ENCODE measurements at regions of chr9 and their contacts with region 1.

Region 1: DNA sequence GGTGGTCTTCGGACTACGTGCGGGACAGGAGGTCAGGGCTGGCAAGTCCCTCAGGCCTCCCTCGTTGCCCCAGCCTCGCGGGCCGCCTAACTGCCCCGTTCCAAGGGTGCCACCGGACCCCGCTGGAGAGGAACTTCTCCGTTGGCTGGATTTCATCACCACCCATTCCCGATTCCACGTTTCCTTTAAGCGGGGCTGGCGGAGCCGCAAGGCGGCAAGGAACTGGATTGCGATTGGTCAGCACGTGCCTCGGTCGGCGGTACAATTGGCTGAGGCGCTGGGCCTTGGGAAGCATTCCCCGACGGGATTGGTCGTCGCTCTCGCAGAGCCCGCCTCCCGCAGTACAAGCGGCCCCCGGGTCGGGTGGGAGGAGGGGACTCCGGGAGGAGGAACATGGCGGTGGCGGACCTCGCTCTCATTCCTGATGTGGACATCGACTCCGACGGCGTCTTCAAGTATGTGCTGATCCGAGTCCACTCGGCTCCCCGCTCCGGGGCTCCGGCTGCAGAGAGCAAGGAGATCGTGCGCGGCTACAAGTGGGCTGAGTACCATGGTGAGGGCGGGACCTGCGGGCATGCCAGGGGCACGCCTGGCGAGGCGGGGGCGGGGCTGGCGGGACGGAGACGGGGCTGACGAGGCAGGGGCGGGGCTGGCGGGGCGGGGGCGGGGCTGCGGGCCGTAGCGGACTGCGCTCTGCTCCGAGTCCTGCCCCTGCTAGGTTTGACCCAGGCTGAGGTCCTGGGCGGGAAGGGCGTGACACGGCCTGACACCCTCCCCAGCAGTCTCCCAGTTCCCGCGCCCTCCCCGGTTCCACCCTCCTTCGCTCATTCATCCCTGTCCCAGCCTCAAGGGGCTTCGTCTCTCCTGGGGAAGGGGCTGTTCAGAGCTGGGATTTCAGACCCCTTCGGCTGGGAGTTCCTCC is at the start of gene PHPT1:
- DNase-seq: peak; percentile 98
- ATAC-seq: peak; percentile 93
- H3K4me3 Mint-ChIP-seq: peak within 1 kb of the TSS; percentile 88
- H3K27ac Mint-ChIP-seq: peak within 1 kb of the TSS; percentile 92
- H3K4me1 Mint-ChIP-seq: peaks cover 16% of the 10 kb centered on the region
- H3K27me3 Mint-ChIP-seq: peaks cover 20% of the 10 kb centered on the region
- total RNA-seq, gene PHPT1: 96.8 to 116 TPM

Region 2: GRCh38 chr9:136807281-136808074 is 41.8 kb before region 1 on chr9 and contains the start of gene RABL6:
- CTCF ChIA-PET with region 1: interaction called, 28 read pairs
- DNase-seq: peak; percentile 83
- ATAC-seq: peak; percentile 91
- H3K4me3 Mint-ChIP-seq: peak within 1 kb of the TSS; percentile 82
- H3K27ac Mint-ChIP-seq: peak within 1 kb of the TSS; percentile 79
- H3K4me1 Mint-ChIP-seq: peaks cover 42% of the 10 kb centered on the region
- H3K27me3 Mint-ChIP-seq: no peaks in the 10 kb centered on the region
- total RNA-seq, gene RABL6: 113 to 123 TPM

Region 3: GRCh38 chr9:136835162-136835931 is 14.0 kb before region 1 on chr9:
- CTCF ChIA-PET with region 1: no interaction called
- DNase-seq: no peak
- ATAC-seq: no peak
- H3K4me3 Mint-ChIP-seq: no peak overlapping the region
- H3K27ac Mint-ChIP-seq: no peak overlapping the region
- H3K4me1 Mint-ChIP-seq: no peaks in the 10 kb centered on the region
- H3K27me3 Mint-ChIP-seq: no peaks in the 10 kb centered on the region

Region 4: GRCh38 chr9:136885950-136886578 is 36.8 kb after region 1 on chr9 and contains the start of gene TRAF2:
- CTCF ChIA-PET with region 1: interaction called, 24 read pairs
- DNase-seq: peak; percentile 98
- ATAC-seq: peak; percentile 91
- H3K4me3 Mint-ChIP-seq: peak within 1 kb of the TSS; percentile 96
- H3K27ac Mint-ChIP-seq: peak within 1 kb of the TSS; percentile 88
- H3K4me1 Mint-ChIP-seq: peaks cover 62% of the 10 kb centered on the region
- H3K27me3 Mint-ChIP-seq: no peaks in the 10 kb centered on the region
- total RNA-seq, gene TRAF2: 58.4 to 67.6 TPM

Region 5: GRCh38 chr9:136902259-136902821 is 53.0 kb after region 1 on chr9:
- CTCF ChIA-PET with region 1: interaction called, 12 read pairs
- DNase-seq: peak; percentile 88
- ATAC-seq: peak; percentile 83
- H3K4me3 Mint-ChIP-seq: peak overlapping the region; percentile 59
- H3K27ac Mint-ChIP-seq: peak overlapping the region; percentile 90
- H3K4me1 Mint-ChIP-seq: peaks cover 43% of the 10 kb centered on the region
- H3K27me3 Mint-ChIP-seq: no peaks in the 10 kb centered on the region

Measured in activated CD8-positive, alpha-beta memory T cell treated with anti-CD3 and anti-CD28 coated beads, Interleukin-2, amount 10 ng/mL, durations not matched to agents 7 days and 5 days (primary cell).